ENCODE measurements at regions of chr5 and their contacts with region 1.

Region 1: DNA sequence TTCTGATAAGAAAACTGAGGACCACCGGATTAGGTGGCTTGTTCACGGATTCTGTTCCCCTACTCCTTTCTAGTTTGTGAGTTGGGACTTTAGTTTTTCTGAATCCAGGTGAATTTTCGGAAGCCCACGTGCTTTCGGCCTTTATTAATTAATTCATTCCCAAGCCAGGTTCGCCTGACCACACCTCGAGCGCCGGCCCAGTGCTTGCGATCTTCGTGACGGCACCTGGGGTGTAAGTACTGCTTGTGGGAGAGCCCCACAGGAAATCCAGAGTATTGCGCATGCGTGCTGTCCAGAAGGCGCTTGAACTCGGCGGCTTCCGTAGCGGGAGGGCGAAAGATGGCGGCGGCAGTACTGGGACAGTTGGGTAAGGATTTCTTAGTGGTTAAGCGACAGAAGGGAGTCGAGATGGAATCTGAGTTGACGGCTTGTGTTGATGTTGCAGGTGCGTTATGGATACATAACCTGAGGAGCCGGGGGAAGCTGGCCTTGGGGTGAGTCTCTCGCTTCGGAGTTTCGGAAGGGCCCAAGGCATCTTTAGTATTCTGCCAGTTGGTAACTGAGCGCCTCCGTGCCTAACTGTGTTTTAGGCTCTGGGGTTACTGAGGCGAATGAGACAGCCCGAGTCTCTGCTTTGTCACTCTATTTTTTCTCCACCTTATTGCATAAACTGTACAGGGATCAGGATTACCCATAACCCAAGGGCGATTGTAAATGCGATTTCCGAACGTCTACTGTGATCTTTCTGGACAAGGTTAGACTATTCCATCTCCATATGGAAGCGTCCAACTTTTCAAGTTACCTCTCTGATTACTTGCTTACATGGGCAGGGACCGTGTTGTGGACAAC is at the start of gene MRPL22:
- DNase-seq: peak; percentile 95
- H3K4me3 ChIP-seq: peak within 1 kb of the TSS; percentile 47 to 75 (median 68)
- H3K27ac ChIP-seq: peak within 1 kb of the TSS; percentile 70 to 81 (median 80)
- H3K4me1 ChIP-seq: peaks cover 0 to 56% (median 43%) of the 10 kb centered on the region in 4 donors
- H3K27me3 ChIP-seq: no peaks in the 10 kb centered on the region
- CTCF ChIP-seq: peak in 2 of 4 experiments; percentile 5 to 42
- EP300 ChIP-seq: no peak
- POLR2A ChIP-seq: peak; percentile 43 to 72
- total RNA-seq, gene MRPL22: 13.8 to 40.0 (median 26.5) TPM

Region 2: DNA sequence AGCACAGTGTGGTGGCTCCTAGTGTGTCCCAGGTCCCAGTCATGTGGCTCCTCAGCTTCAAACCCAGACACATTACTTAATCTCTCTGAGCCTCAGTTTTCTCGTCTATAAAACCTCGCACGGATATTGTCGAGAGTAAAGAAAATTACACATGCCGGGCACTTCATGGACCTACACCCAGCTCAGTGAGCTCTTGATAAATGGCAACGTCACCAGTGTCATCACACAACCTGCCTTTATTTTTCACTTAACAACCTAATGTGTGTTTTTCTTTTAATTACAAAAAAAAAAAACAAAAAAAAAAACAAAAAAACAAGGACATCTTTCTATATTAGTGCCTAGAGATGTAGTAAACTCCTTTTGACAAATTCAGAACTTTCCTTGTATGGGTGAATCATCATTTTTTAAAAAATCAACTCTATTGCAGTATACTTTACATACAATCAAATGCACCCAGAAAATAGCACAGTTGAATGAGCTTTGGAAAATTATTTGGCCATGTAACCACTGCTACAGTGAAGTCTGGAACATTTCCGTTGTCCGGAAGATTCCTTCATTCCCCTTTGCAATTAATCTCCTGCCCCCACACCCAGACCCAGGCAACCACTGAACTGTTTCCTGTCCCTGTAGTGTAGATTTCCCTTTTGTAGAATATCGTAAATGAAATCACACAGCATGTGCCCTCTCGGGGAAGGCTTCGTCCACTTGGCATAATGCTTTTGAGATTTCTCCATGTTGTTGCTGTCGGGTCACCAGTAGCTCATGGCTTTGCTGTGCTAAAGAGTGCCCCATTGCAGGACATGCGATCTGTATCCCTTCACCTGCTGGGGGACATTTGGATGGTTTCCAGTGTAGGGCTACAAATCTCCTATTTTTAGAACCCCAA is 286.3 kb before region 1 on chr5:
- intact Hi-C with region 1: loop called (anchors 10 kb)
- DNase-seq: no peak
- H3K4me3 ChIP-seq: peak overlapping the region in 3 of 4 donors; percentile 22 to 34 (median 29)
- H3K27ac ChIP-seq: peak overlapping the region in 3 of 4 donors; percentile 29 to 64 (median 48)
- H3K4me1 ChIP-seq: peaks cover 0 to 17% (median 11%) of the 10 kb centered on the region in 4 donors
- H3K27me3 ChIP-seq: no peaks in the 10 kb centered on the region
- CTCF ChIP-seq: no peak
- EP300 ChIP-seq: no peak
- POLR2A ChIP-seq: no peak

Region 3: DNA sequence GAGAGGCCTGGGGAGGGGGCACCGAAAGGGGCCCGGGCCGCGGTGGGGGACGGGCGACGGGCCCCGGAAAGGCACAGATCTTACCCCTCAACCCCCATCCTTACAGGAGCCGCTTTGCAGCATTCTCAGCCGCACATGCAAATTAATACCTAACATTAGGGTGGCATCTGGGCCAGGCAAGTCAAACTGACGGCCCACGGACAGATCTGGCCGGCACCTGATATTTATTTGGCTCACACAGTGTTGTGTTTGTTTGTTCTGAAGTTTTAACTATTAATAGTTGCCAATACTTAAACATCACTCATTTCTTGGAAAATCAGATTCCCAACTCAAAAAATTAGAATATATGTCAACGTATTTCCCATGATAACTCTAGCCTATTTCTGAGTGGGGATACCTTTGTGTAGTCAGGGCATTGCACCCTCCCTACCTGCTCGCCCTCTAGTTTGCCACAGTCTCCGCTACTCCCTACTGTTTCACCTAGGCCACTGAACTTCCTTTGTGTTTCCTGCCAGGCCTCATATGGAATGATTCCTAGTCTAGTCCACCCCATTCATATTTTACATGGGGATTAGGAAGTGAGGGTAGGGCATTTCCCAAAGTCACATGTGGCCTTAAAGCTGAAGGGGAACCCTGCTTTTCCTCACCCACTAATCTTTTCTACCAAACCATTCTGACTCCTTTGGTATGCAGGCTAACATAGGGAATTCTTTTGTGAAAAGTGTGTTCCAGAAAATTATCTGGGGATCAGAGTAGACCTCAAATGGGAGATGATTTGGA is 257.7 kb before region 1 on chr5:
- intact Hi-C with region 1: loop called (anchors 10 kb)
- DNase-seq: no peak
- H3K4me3 ChIP-seq: peak overlapping the region; percentile 15 to 55 (median 52)
- H3K27ac ChIP-seq: peak overlapping the region; percentile 76 to 86 (median 82)
- H3K4me1 ChIP-seq: peaks cover 0 to 25% (median 16%) of the 10 kb centered on the region in 4 donors
- H3K27me3 ChIP-seq: no peaks in the 10 kb centered on the region
- CTCF ChIP-seq: no peak
- EP300 ChIP-seq: no peak
- POLR2A ChIP-seq: no peak

Region 4: DNA sequence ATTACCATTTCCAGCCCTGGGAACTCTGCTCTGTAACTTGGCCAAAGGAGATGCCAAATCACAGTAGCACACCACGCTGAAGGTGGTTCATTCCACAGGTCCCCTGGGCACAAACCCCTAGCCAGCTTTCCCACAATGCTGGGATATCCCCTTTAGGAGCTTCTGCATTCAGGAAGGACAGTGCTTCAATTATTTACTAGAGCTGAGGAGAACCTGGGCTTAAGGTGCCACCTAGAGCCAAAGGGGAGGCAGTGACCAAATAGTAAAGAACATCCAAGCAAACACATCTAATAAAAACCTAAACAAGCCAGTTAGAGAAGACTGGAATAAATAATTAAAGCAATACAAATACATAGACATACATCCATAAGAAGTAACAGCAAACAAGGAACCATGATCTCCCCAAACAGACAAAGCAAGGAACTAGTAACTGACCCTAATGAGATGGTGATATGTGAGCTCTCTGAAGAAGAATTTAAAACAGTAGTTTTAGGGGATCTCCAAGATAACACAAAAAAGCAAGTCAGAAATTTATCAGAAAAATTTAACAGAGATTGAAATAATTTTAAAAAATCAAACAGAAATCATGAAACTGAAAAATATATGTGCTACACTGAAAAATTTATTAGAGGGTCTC is 87.1 kb after region 1 on chr5:
- intact Hi-C with region 1: no loop called
- DNase-seq: no peak
- H3K4me3 ChIP-seq: no peak overlapping the region
- H3K27ac ChIP-seq: no peak overlapping the region
- H3K4me1 ChIP-seq: no peaks in the 10 kb centered on the region
- H3K27me3 ChIP-seq: no peaks in the 10 kb centered on the region
- CTCF ChIP-seq: no peak
- EP300 ChIP-seq: no peak
- POLR2A ChIP-seq: no peak